WTC11 (cell line): ENCODE measurements at regions of chr3 and their contacts with region 1.

Region 1: DNA sequence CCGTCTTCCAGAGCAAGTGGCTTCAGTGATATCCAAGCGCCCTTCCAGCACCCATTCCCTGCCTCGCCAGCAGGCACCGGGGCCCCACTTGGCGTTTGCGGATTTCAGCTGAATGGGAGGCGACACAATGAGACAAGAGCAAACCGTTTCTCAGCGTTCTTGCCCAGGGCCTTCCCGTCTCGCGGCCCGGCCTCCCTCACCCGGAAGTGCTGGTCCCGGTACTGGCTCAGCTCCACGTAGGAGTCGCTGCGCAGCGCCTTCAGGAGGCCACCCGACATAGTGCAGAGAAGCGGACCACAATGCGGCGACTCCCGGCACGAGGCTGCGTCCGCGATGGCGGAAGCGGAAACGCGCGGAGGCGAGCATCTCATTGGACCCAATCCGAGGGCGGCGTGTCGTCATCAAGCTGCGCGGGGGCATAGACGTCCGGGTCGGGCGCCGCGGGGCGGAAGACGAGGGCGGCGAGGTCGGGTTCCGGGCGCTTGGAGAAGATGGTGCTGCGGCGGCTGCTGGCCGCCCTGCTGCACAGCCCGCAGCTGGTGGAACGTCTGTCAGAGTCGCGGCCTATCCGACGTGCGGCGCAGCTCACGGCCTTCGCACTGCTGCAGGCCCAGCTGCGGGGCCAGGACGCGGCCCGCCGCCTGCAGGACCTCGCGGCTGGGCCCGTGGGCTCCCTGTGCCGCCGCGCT is at the start of gene NCBP2:
- DNase-seq: peak; percentile 99
- ATAC-seq: peak; percentile 91
- H3K4me3 Mint-ChIP-seq: peak within 1 kb of the TSS; percentile 99
- H3K27ac Mint-ChIP-seq: peak within 1 kb of the TSS; percentile 98
- H3K4me1 Mint-ChIP-seq: peaks cover 31% of the 10 kb centered on the region
- H3K27me3 Mint-ChIP-seq: no peaks in the 10 kb centered on the region
- CTCF ChIP-seq: no peak
- total RNA-seq, gene NCBP2: 96.5 to 100.0 TPM (median 96.9 TPM) in 3 replicates

Region 2: GRCh38 chr3:196867507-196868296 is 74.7 kb before region 1 on chr3 and contains the start of gene SENP5:
- CTCF ChIA-PET with region 1: interaction called, 15 read pairs
- POLR2A ChIA-PET with region 1: interaction called, 16 read pairs
- DNase-seq: peak; percentile 87
- ATAC-seq: peak; percentile 96
- H3K4me3 Mint-ChIP-seq: peak within 1 kb of the TSS; percentile 97
- H3K27ac Mint-ChIP-seq: peak within 1 kb of the TSS; percentile 97
- H3K4me1 Mint-ChIP-seq: peaks cover 11% of the 10 kb centered on the region; the same call in 1 of the 2 replicates
- H3K27me3 Mint-ChIP-seq: no peaks in the 10 kb centered on the region
- CTCF ChIP-seq: no peak
- total RNA-seq, gene SENP5: 25.0 to 30.8 TPM (median 26.2 TPM) in 3 replicates